Cardiac septum (tissue), 1 donor: ENCODE measurements at regions of chr14 and their contacts with region 1.

Region 1: GRCh38 chr14:105666420-105666819 is 140.0 kb downstream of the TMEM121 start:
- DNase-seq: no peak

Region 2: DNA sequence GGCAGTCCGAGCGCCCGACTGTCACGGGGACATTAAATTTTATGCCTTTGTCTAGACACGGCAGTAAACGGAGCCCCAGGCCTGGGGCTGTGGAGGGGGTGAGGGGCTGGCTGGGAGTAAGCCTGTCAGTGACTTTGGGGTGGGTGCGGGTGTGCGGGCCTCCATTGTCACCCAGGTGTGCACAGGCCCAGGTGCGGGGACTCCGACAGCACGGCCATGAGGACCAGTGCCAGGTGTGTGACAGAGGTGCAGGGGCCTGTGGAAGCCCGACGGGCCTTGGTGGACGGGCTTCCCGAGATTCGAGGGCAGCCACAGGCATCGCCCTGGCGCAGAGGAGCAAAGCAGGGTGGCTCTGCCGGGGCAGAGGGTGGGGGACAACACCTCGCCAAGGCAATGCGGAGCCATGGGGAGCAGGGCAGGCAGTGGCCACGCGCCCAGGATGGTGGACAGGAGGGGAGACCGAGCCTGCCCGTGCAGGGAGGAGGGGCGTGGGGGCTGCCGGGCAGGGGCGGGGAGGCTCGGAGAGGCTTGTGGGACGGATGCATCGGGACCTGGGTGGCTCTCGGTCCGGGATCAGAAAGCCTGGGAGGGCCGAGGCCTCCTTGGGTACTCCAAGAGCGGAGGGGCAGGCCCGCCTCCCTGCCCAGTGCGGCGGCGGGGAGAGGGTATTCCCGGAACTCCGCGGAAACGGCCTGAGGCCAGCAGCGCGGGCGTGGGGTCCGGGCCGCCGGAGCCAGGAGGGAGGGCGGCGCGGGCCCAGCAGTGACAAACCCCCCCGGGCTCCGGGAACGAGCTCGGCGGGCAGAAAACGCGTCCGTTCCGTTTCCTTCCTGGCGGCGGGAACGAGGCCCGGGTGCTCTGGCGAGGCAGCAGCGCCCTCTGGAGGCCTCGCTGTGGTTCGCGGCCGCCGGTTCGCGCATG is 138.5 kb before region 1 on chr14:
- intact Hi-C with region 1: no loop called
- DNase-seq: peak; percentile 90

Region 3: DNA sequence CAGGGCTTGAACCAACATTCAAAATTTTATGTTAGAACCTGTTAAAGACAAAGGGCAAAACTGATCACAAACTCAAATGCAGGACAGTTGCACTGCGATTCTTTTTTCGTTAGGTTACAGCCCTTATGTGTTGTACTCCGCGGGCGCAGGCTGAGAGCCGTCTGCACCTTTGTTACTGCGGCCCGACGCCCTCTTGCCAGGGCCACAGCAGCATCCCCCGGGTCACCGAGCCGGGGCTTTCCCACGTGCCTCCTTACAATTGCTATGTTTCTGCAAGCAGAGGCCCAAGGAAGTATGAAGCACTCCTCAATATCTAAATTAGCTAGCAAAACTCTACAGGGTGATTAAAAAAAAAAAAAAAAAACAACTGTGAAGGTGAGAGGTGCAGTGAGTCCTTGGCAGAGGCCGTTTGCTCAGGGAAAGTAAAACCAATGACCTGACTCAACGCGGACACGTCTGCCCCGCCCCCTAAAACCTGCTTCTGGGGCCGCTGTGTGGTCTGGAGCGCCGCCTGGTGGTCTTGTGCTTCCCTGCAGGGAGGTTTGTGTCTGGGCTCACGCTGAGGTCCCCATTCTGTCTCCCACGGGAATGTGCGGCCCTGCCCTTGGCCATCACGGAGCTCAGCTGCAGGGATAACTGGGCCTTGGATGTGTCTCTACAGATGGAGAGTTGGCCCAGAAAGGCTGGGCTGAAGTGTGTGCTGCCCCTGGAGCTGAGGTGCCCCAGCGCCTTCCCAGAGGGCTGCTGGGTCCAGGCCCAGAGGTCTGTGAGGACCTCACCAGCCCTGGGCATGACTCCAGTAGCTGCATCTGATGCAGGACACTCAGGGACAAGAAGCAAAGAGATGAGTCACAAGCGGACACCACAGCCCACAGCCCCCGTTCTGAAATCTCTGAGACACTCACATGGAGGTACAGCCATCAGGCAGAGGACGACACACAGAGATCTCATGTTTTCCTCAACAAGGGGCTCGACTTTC is 278.5 kb after region 1 on chr14:
- intact Hi-C with region 1: loop called (anchors 10 kb)
- DNase-seq: no peak

Region 4: GRCh38 chr14:105989566-105990302 is 323.3 kb after region 1 on chr14:
- intact Hi-C with region 1: no loop called
- DNase-seq: no peak